ENCODE measurements at regions of chr21 and their contacts with region 1.

Region 1: DNA sequence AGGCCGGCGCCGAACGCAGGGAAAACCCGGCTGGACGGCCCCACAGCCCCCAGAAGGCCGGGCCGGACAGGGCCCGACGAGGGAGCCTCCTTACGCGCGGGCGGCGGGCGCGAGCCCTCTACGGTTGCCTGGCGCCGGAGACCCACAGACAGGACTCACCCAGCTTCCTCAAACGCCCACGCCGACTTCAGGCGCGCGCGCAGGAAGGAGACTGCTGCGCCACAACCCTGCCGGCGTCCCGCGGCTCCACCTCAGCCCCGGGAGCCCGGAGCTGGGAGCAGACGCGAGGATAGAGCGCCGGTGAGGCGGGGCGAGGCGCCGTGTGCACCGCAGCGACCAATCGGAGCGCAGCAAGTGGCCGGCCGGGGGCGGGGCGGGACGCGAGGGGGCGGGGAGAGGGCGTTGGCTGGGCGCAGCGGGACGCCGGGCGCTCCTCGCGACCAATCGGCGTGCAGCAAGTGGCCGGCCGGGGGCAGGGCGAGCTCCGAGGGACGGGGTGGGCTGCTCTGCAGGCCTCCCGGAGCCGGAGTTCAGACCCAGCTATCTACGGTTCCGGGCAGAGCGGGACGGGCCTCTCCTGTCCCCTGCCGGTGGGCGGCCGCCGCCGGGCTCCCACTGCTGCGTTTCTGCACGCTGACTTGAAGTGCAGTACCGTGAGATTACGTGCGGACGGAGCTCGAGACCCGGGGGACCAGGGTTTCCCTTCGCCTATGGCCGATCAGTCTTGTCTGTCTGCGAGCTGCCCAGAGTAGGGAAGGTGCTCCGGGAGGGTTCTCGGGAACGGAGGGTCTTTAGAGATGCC is at the start of gene TMEM50B:
- DNase-seq: peak; percentile 83 to 96
- H3K4me3 ChIP-seq: peak within 1 kb of the TSS; percentile 80 to 81
- H3K27ac ChIP-seq: peak within 1 kb of the TSS; percentile 94 to 95
- H3K4me1 ChIP-seq: peaks cover 5 to 15% of the 10 kb centered on the region in 2 donors
- H3K27me3 ChIP-seq: no peaks in the 10 kb centered on the region
- CTCF ChIP-seq: peak; percentile 40 to 54 (median 47)
- total RNA-seq, gene TMEM50B: 24.9 TPM

Region 2: GRCh38 chr21:33491373-33492102 is 11.7 kb after region 1 on chr21 and contains the start of gene DNAJC28:
- intact Hi-C with region 1: loop called (anchors 1 kb)
- DNase-seq: peak; percentile 81 to 97
- H3K4me3 ChIP-seq: peak within 1 kb of the TSS; percentile 69 to 75
- H3K27ac ChIP-seq: peak within 1 kb of the TSS; percentile 72 to 79
- H3K4me1 ChIP-seq: no peaks in the 10 kb centered on the region
- H3K27me3 ChIP-seq: no peaks in the 10 kb centered on the region
- CTCF ChIP-seq: no peak
- total RNA-seq, gene DNAJC28: 1.5 TPM

Region 3: GRCh38 chr21:33514229-33514628 is 34.3 kb after region 1 on chr21:
- intact Hi-C with region 1: no loop called
- DNase-seq: no peak
- H3K4me3 ChIP-seq: no peak overlapping the region
- H3K27ac ChIP-seq: no peak overlapping the region
- H3K4me1 ChIP-seq: no peaks in the 10 kb centered on the region
- H3K27me3 ChIP-seq: no peaks in the 10 kb centered on the region
- CTCF ChIP-seq: no peak

Region 4: GRCh38 chr21:33542640-33543504 is 63.0 kb after region 1 on chr21 and contains the start of gene SON:
- intact Hi-C with region 1: loop called (anchors 1 kb)
- DNase-seq: peak; percentile 98 to 99
- H3K4me3 ChIP-seq: peak within 1 kb of the TSS; percentile 79 to 82
- H3K27ac ChIP-seq: peak within 1 kb of the TSS; percentile 98 to 99
- H3K4me1 ChIP-seq: peaks cover 0 to 18% of the 10 kb centered on the region in 2 donors
- H3K27me3 ChIP-seq: no peaks in the 10 kb centered on the region
- CTCF ChIP-seq: no peak
- total RNA-seq, gene SON: 179 TPM

Measured in ascending aorta (tissue), 2 donors.